ENCODE measurements at regions of chr10 and their contacts with region 1.

Region 1: DNA sequence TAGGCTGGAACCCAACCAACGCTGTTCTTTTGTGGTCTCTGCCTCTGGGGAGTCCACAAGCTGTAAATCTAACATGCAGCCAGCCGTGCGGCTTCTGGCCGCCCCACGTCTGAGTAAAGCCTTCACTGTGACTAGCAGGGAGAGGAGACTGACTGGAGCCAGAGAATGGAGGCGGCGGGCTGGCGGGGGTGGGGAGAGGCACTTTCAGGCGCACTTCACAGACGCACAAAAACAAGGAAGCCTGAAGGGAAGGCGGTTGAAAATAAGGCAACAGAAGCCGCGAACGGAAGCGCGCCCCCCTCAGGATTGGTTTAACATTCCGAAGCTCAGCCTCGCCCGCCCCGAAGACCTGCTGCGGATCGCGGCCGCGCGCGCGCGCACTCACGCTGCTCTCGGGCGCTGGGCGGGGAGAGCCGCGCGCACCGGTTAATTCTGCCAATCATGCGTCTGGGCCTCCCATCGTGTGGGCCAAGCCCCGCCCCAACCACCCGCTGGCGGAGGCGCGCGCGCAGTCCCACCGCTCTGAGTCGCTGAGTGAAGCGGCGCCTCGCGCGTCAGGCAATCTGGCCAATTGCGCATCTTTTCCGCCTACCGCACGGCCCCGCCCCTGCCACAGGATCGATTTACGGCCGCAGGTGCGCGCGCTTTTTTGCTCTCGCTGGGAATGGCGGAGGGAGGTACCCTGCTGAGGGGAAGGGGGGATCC is at the start of gene SFR1:
- DNase-seq: peak; percentile 90 to 97
- H3K4me3 ChIP-seq: peak within 1 kb of the TSS; percentile 85
- H3K27ac ChIP-seq: peak within 1 kb of the TSS; percentile 97
- H3K4me1 ChIP-seq: peaks cover 45% of the 10 kb centered on the region
- H3K27me3 ChIP-seq: no peaks in the 10 kb centered on the region
- CTCF ChIP-seq: peak; percentile 57
- total RNA-seq, gene SFR1: 4.3 TPM in 2 replicates

Region 2: DNA sequence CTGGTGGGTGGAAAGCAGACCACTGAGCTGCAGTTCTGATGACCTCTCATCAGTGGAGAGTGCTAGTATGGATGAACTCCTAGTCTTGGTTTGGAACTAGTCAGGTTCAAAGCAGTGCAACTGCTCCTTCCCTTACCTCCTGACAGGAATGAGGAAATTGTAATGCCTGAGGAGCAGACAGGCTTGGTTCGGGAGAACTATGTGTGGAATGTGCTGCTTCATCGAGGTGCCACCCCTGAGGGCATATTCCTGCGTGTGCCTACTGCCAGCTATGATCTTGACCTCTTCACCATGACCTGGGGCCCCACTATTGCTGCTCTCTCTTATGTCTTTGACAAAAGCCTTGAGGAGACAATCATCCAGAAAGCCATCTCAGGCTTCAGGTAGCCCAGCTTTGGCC is 1753.6 kb before region 1 on chr10:
- CTCF ChIA-PET with region 1: no interaction called
- POLR2A ChIA-PET with region 1: interaction called, 26 read pairs
- intact Hi-C with region 1: no loop called
- DNase-seq: peak; percentile 79 to 90
- H3K4me3 ChIP-seq: no peak overlapping the region
- H3K27ac ChIP-seq: peak overlapping the region; percentile 80
- H3K4me1 ChIP-seq: peaks cover 23% of the 10 kb centered on the region
- H3K27me3 ChIP-seq: no peaks in the 10 kb centered on the region
- CTCF ChIP-seq: no peak

Region 3: GRCh38 chr10:103905441-103905840 is 216.2 kb before region 1 on chr10:
- CTCF ChIA-PET with region 1: no interaction called
- POLR2A ChIA-PET with region 1: interaction called, 6 read pairs
- intact Hi-C with region 1: loop called (anchors 5 kb)
- DNase-seq: no peak
- H3K4me3 ChIP-seq: no peak overlapping the region
- H3K27ac ChIP-seq: no peak overlapping the region
- H3K4me1 ChIP-seq: peaks cover 33% of the 10 kb centered on the region
- H3K27me3 ChIP-seq: no peaks in the 10 kb centered on the region
- CTCF ChIP-seq: no peak

Region 4: GRCh38 chr10:103966671-103967447 is 154.8 kb before region 1 on chr10 and contains the start of gene SLK:
- CTCF ChIA-PET with region 1: no interaction called
- POLR2A ChIA-PET with region 1: no interaction called
- intact Hi-C with region 1: loop called (anchors 1 kb)
- DNase-seq: peak; percentile 36 to 70
- H3K4me3 ChIP-seq: peak within 1 kb of the TSS; percentile 99
- H3K27ac ChIP-seq: peak within 1 kb of the TSS; percentile 56
- H3K4me1 ChIP-seq: peaks cover 17% of the 10 kb centered on the region
- H3K27me3 ChIP-seq: no peaks in the 10 kb centered on the region
- CTCF ChIP-seq: no peak
- total RNA-seq, gene SLK: 24.0 and 30.4 TPM in 2 replicates

Region 5: GRCh38 chr10:104081998-104082397 is 39.7 kb before region 1 on chr10:
- CTCF ChIA-PET with region 1: interaction called, 11 read pairs
- POLR2A ChIA-PET with region 1: interaction called, 10 read pairs
- intact Hi-C with region 1: loop called (anchors 1 kb)
- DNase-seq: no peak
- H3K4me3 ChIP-seq: no peak overlapping the region
- H3K27ac ChIP-seq: no peak overlapping the region
- H3K4me1 ChIP-seq: peaks cover 11% of the 10 kb centered on the region
- H3K27me3 ChIP-seq: no peaks in the 10 kb centered on the region
- CTCF ChIP-seq: no peak

Region 6: GRCh38 chr10:104099941-104100340 is 21.7 kb before region 1 on chr10:
- CTCF ChIA-PET with region 1: interaction called, 20 read pairs
- POLR2A ChIA-PET with region 1: interaction called, 5 read pairs
- intact Hi-C with region 1: no loop called
- DNase-seq: no peak
- H3K4me3 ChIP-seq: no peak overlapping the region
- H3K27ac ChIP-seq: peak overlapping the region; percentile 57
- H3K4me1 ChIP-seq: peaks cover 21% of the 10 kb centered on the region
- H3K27me3 ChIP-seq: no peaks in the 10 kb centered on the region
- CTCF ChIP-seq: no peak

Measured in PC-9 (cell line).